PC-9 (cell line): ENCODE measurements at regions of chr4 and their contacts with region 1.

Region 1: GRCh38 chr4:1767770-1768366 is 25.2 kb upstream of the FGFR3 start:
- DNase-seq: peak in 1 of 2 experiments; percentile 46
- H3K4me3 ChIP-seq: no peak overlapping the region
- H3K27ac ChIP-seq: no peak overlapping the region
- H3K4me1 ChIP-seq: peaks cover 30% of the 10 kb centered on the region
- H3K27me3 ChIP-seq: peaks cover 2% of the 10 kb centered on the region; the same call in 1 of the 2 replicates
- CTCF ChIP-seq: peak; percentile 40; the same call in 1 of the 2 replicates

Region 2: GRCh38 chr4:1289207-1290164 is 478.4 kb before region 1 on chr4 and contains the start of gene MAEA:
- CTCF ChIA-PET with region 1: interaction called, 10 read pairs
- POLR2A ChIA-PET with region 1: no interaction called
- intact Hi-C with region 1: no loop called
- DNase-seq: peak; percentile 90 to 97
- H3K4me3 ChIP-seq: peak within 1 kb of the TSS; percentile 77
- H3K27ac ChIP-seq: peak within 1 kb of the TSS; percentile 53
- H3K4me1 ChIP-seq: peaks cover 27% of the 10 kb centered on the region
- H3K27me3 ChIP-seq: no peaks in the 10 kb centered on the region
- CTCF ChIP-seq: no peak
- total RNA-seq, gene MAEA: 79.4 and 88.6 TPM in 2 replicates

Region 3: DNA sequence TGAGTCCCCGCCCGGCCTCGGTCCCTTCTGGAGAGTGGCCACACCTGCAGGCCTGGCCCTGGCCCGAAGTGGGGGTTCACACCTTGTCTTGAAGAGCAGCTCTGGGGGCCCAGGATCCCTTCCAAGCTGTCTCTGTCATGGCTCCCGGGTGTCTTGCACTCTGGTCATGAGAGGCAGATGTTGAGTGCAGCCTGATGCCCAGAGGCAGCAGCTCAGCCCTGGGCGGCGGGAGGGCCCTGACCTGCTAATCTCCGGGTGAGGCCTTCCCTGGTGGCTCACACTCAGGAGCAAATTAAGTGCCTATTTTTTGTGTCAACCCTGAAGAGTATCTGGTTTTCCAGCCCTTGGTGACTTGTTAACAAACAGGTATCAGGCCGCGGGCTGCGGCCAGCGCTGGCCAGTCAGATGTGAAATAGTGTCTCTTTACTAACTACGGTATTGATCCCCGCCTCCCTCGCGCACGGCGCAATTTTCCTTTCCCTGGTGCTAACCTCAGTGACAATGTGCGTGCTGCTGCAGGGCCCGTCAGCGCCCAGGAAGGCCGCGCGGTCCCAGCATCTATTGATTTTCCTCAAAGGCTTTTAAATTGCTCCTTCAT is 385.8 kb before region 1 on chr4:
- CTCF ChIA-PET with region 1: no interaction called
- POLR2A ChIA-PET with region 1: no interaction called
- intact Hi-C with region 1: no loop called
- DNase-seq: no peak
- H3K4me3 ChIP-seq: no peak overlapping the region
- H3K27ac ChIP-seq: no peak overlapping the region
- H3K4me1 ChIP-seq: no peaks in the 10 kb centered on the region
- H3K27me3 ChIP-seq: no peaks in the 10 kb centered on the region
- CTCF ChIP-seq: no peak

Region 4: GRCh38 chr4:1644891-1645657 is 122.8 kb before region 1 on chr4:
- CTCF ChIA-PET with region 1: no interaction called
- POLR2A ChIA-PET with region 1: interaction called, 11 read pairs
- intact Hi-C with region 1: no loop called
- DNase-seq: no peak
- H3K4me3 ChIP-seq: no peak overlapping the region
- H3K27ac ChIP-seq: no peak overlapping the region
- H3K4me1 ChIP-seq: no peaks in the 10 kb centered on the region
- H3K27me3 ChIP-seq: peaks cover 17% of the 10 kb centered on the region
- CTCF ChIP-seq: no peak

Region 5: DNA sequence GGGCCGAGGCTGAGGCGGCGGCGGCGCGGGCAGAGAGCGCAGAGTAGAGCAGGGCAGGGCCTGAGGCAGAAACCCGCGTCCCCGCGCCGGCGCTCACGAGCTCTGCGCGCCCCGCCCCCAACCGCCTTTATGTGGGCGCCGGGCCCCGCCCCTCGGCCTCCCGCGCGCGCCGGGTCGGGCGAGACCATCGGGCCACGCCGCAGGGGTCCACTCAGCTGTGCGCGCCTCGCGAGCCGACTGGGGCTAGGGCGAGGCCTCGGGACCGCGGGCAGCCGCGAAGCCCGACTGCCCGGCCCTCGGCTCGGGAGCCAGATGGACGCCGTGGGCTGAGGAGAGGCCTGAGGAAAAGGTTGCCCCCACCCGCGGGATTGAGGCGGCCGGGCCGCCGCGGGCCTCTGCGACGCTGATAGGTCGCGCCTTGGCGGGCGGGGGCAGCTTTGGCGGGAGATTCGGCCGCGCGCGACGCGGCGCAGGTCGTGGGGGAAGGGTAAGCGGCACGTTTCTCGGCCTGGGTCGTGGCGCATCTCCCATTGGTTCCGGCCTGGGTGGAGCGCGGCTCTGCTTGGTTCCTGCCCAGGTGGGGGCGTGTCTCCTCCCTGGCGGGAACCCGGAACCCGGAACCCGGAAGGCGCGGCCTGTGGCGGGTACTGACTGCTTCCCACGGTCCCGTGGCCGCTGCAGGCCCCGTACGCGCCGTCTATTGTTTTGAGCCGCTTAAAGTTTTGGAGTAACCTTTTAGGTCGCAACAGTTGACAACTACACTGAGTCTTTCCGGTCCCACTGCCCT is 55.5 kb before region 1 on chr4 and contains the start of gene SLBP:
- CTCF ChIA-PET with region 1: interaction called, 11 read pairs
- POLR2A ChIA-PET with region 1: no interaction called
- intact Hi-C with region 1: no loop called
- DNase-seq: peak; percentile 90 to 98
- H3K4me3 ChIP-seq: peak within 1 kb of the TSS; percentile 71
- H3K27ac ChIP-seq: peak within 1 kb of the TSS; percentile 96
- H3K4me1 ChIP-seq: peaks cover 20% of the 10 kb centered on the region
- H3K27me3 ChIP-seq: no peaks in the 10 kb centered on the region
- CTCF ChIP-seq: no peak
- total RNA-seq, gene SLBP: 61.7 and 63.4 TPM in 2 replicates

Region 6: DNA sequence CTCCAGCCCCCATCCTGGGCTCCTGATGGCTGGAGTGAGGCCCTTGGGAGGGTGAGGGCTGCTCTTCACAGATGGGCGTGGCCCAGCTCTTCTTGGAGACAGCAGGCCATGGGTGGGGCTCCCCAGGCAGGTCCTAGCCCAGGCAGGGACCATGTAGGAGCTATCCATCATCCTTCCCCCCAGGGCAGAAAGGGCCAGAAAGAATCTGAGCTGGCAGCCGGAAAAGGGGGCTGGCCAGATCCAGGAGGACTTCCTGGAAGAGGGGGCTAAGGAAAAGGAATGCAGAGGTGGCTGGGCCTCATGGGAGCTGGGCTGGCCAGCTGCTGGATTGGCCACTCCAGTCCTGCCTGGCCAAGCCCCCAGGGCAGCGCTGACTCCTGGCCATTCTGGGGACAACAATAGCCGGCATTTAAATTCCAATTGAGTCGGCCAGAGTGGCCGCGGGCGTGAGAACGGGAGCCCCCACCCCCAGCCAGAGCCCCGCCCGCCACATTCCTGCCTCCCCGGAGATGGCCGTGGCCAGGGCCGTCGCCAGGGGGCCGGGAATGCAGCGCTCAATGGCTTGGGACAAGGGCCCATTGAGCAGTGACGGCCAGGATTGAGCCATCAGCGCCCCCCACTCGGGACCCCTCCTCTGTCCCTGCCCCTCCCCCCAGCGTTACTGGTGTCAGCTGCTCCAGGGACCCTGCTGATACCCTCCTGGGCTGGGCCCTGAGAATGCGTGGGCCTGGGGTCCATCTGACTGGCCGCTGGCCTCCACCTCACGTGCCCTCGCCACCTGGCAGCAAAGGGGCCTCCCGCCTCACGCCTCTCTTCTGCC is 10.2 kb after region 1 on chr4:
- CTCF ChIA-PET with region 1: no interaction called
- POLR2A ChIA-PET with region 1: interaction called, 3 read pairs
- intact Hi-C with region 1: loop called (anchors 1 kb)
- DNase-seq: peak; percentile 86 to 95
- H3K4me3 ChIP-seq: no peak overlapping the region; the same call in 1 of the 2 replicates
- H3K27ac ChIP-seq: no peak overlapping the region
- H3K4me1 ChIP-seq: peaks cover 48% of the 10 kb centered on the region
- H3K27me3 ChIP-seq: no peaks in the 10 kb centered on the region
- CTCF ChIP-seq: no peak; the same call in 1 of the 2 replicates

Region 7: DNA sequence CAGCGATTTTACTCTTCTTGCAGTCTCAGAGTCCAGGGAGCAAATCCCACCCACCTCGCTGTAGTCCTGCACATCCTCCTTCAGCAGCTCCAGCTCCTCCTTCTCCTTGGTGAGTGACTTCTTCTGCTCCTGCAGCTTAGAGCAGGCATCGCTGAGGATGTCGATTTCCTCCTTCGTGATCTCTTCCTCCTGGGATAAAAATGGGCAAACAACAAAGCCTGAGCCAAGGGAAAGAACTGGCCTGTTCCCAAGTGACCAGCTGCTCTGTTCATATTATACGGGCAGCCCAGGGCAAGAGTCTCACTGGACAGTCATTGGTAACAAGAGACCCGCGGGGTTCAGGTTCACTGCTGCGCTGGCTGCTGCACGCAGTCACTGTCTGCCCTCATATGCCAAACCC is 51.4 kb after region 1 on chr4:
- CTCF ChIA-PET with region 1: interaction called, 18 read pairs
- POLR2A ChIA-PET with region 1: no interaction called
- intact Hi-C with region 1: no loop called
- DNase-seq: no peak
- H3K4me3 ChIP-seq: no peak overlapping the region
- H3K27ac ChIP-seq: no peak overlapping the region
- H3K4me1 ChIP-seq: no peaks in the 10 kb centered on the region
- H3K27me3 ChIP-seq: no peaks in the 10 kb centered on the region
- CTCF ChIP-seq: no peak